Natural killer cell (primary cell): ENCODE measurements at regions of chrX and their contacts with region 1.

Region 1: GRCh38 chrX:129606918-129607317 is 47.8 kb downstream of the APLN start:
- DNase-seq: peak; percentile 26 to 79
- ATAC-seq: peak; percentile 64 to 78 (median 69)
- H3K4me3 ChIP-seq: no peak overlapping the region
- H3K4me3 Mint-ChIP-seq: no peak overlapping the region
- H3K27ac ChIP-seq: no peak overlapping the region
- H3K27ac Mint-ChIP-seq: no peak overlapping the region
- H3K4me1 ChIP-seq: peaks cover 21% of the 10 kb centered on the region
- H3K4me1 Mint-ChIP-seq: peaks cover 6 to 24% of the 10 kb centered on the region in 2 donors
- H3K27me3 ChIP-seq: no peaks in the 10 kb centered on the region
- H3K27me3 Mint-ChIP-seq: peaks cover 0 to 11% of the 10 kb centered on the region in 2 donors
- CTCF ChIP-seq: peak; percentile 62

Region 2: GRCh38 chrX:129449148-129449547 is 157.8 kb before region 1 on chrX:
- intact Hi-C with region 1: no loop called
- DNase-seq: no peak
- ATAC-seq: peak in 1 of 3 donors; percentile 81
- H3K4me3 ChIP-seq: no peak overlapping the region
- H3K4me3 Mint-ChIP-seq: no peak overlapping the region
- H3K27ac ChIP-seq: no peak overlapping the region
- H3K27ac Mint-ChIP-seq: no peak overlapping the region
- H3K4me1 ChIP-seq: no peaks in the 10 kb centered on the region
- H3K4me1 Mint-ChIP-seq: no peaks in the 10 kb centered on the region
- H3K27me3 ChIP-seq: no peaks in the 10 kb centered on the region
- H3K27me3 Mint-ChIP-seq: peaks cover 0 to 12% of the 10 kb centered on the region in 2 donors
- CTCF ChIP-seq: no peak

Region 3: GRCh38 chrX:129726307-129727111 is 119.6 kb after region 1 on chrX:
- intact Hi-C with region 1: loop called (anchors 5 kb)
- DNase-seq: peak in 1 of 2 donors; percentile 56
- ATAC-seq: peak in 2 of 3 donors; percentile 44 to 58
- H3K4me3 ChIP-seq: no peak overlapping the region
- H3K4me3 Mint-ChIP-seq: no peak overlapping the region
- H3K27ac ChIP-seq: no peak overlapping the region
- H3K27ac Mint-ChIP-seq: no peak overlapping the region
- H3K4me1 ChIP-seq: peaks cover 10% of the 10 kb centered on the region
- H3K4me1 Mint-ChIP-seq: peaks cover 22 to 35% of the 10 kb centered on the region in 2 donors
- H3K27me3 ChIP-seq: no peaks in the 10 kb centered on the region
- H3K27me3 Mint-ChIP-seq: peaks cover 0 to 25% of the 10 kb centered on the region in 2 donors
- CTCF ChIP-seq: peak; percentile 50

Region 4: GRCh38 chrX:129823115-129823514 is 216.2 kb after region 1 on chrX:
- intact Hi-C with region 1: loop called (anchors 1 kb)
- DNase-seq: peak; percentile 16 to 81
- ATAC-seq: peak; percentile 77 to 89 (median 85)
- H3K4me3 ChIP-seq: no peak overlapping the region
- H3K4me3 Mint-ChIP-seq: no peak overlapping the region
- H3K27ac ChIP-seq: no peak overlapping the region
- H3K27ac Mint-ChIP-seq: no peak overlapping the region
- H3K4me1 ChIP-seq: no peaks in the 10 kb centered on the region
- H3K4me1 Mint-ChIP-seq: no peaks in the 10 kb centered on the region
- H3K27me3 ChIP-seq: no peaks in the 10 kb centered on the region
- H3K27me3 Mint-ChIP-seq: no peaks in the 10 kb centered on the region
- CTCF ChIP-seq: peak; percentile 68

Region 5: DNA sequence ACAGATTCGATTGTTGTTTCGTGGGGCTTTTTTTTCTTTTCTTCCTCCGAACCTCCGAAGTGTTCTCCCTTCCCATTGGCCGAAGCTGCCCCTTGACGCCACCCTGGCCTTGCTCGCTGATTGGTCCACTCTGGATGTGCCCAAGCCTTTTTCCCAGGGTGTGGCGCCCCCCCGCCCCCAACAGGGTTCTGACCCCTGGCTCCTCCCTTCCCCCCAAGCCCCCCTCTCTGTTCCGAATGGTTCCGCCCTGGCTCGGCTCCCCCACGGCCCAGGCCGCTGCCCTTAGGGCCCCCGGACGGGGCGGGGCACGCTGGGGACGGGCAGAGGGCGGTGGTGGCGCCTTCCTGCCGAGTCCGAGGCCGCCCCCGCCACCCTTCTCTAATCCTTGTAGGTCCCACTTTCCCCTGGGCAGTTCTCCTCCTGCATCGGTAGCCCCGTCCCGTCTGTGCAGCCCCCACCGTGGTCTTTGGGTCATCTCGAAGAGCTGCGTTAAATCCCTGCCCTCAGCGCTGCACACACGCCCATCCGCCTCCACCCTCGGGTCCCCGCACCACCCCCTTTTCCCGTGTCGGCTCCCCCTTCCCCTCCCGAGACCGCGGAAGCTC is 324.6 kb after region 1 on chrX:
- intact Hi-C with region 1: loop called (anchors 10 kb)
- DNase-seq: peak; percentile 33 to 76
- ATAC-seq: peak; percentile 64 to 80 (median 68)
- H3K4me3 ChIP-seq: peak overlapping the region; percentile 75
- H3K4me3 Mint-ChIP-seq: peak overlapping the region; percentile 85
- H3K27ac ChIP-seq: peak overlapping the region; percentile 78
- H3K27ac Mint-ChIP-seq: peak overlapping the region; percentile 80 to 84
- H3K4me1 ChIP-seq: peaks cover 7% of the 10 kb centered on the region
- H3K4me1 Mint-ChIP-seq: peaks cover 0 to 5% of the 10 kb centered on the region in 2 donors
- H3K27me3 ChIP-seq: no peaks in the 10 kb centered on the region
- H3K27me3 Mint-ChIP-seq: no peaks in the 10 kb centered on the region
- CTCF ChIP-seq: no peak

Region 6: GRCh38 chrX:130024127-130024526 is 417.2 kb after region 1 on chrX:
- intact Hi-C with region 1: loop called (anchors 10 kb)
- DNase-seq: peak; percentile 68 to 91
- ATAC-seq: peak; percentile 99 to 100 (median 100)
- H3K4me3 ChIP-seq: no peak overlapping the region
- H3K4me3 Mint-ChIP-seq: peak overlapping the region; percentile 71
- H3K27ac ChIP-seq: peak overlapping the region; percentile 45
- H3K27ac Mint-ChIP-seq: peak overlapping the region; percentile 49 to 83
- H3K4me1 ChIP-seq: peaks cover 12% of the 10 kb centered on the region
- H3K4me1 Mint-ChIP-seq: peaks cover 13% of the 10 kb centered on the region in 2 donors
- H3K27me3 ChIP-seq: no peaks in the 10 kb centered on the region
- H3K27me3 Mint-ChIP-seq: no peaks in the 10 kb centered on the region
- CTCF ChIP-seq: no peak

Region 7: DNA sequence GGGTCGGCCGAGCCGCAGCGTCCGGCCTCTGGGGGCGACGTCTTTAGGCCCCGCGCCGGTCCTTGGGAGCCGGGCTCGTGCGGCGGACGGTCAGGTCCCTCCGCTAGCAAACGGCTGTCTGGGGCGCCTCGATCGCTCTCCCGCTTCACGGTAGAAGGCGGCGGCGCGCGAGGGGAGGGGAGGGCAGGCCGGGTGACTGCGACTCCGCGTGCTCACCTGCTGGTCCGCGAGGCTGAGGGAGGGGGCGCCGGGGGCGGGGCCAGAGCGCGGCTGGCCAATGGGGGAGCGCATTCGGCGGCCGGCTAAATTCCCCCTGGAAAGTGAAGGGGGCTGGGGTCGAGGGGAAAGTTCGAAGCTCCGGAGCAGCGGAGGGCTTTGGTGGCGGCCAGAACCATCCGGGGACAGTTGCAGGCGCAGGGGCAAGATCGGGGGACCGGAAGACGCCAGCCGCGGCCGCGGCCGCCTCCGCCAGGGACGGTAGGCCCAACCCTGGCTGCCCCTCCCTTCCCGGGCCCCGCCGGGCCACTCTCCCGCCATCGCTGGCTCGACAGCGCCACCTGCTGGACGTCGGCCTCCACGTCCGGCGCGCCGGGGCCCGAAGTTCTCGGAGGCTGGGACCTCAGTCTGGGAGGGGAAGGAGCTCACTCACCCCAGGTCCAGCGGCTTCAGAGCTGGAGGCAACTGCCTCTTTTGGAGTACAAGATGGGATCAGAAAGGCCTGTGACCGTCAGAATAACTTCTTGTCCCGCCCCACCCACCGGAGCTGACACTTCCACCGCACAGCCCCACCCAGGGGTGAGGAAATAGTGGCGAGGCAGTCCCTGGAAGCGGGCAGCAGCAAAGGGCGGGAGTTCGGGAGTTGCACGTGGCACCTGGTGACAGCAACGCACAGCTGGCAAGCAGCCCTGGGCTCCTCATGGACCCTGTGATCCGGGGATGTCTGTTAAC is 453.5 kb after region 1 on chrX:
- intact Hi-C with region 1: loop called (anchors 2 kb)
- DNase-seq: peak; percentile 83 to 86
- ATAC-seq: peak; percentile 91 to 97 (median 92)
- H3K4me3 ChIP-seq: peak overlapping the region; percentile 46
- H3K4me3 Mint-ChIP-seq: peak overlapping the region; percentile 83
- H3K27ac ChIP-seq: no peak overlapping the region
- H3K27ac Mint-ChIP-seq: peak overlapping the region in 1 of 2 donors; percentile 70
- H3K4me1 ChIP-seq: peaks cover 15% of the 10 kb centered on the region
- H3K4me1 Mint-ChIP-seq: peaks cover 4 to 7% of the 10 kb centered on the region in 2 donors
- H3K27me3 ChIP-seq: no peaks in the 10 kb centered on the region
- H3K27me3 Mint-ChIP-seq: no peaks in the 10 kb centered on the region
- CTCF ChIP-seq: peak; percentile 70

Region 8: GRCh38 chrX:130196466-130196865 is 589.5 kb after region 1 on chrX:
- intact Hi-C with region 1: loop called (anchors 10 kb)
- DNase-seq: no peak
- ATAC-seq: no peak
- H3K4me3 ChIP-seq: no peak overlapping the region
- H3K4me3 Mint-ChIP-seq: no peak overlapping the region
- H3K27ac ChIP-seq: no peak overlapping the region
- H3K27ac Mint-ChIP-seq: no peak overlapping the region
- H3K4me1 ChIP-seq: no peaks in the 10 kb centered on the region
- H3K4me1 Mint-ChIP-seq: no peaks in the 10 kb centered on the region
- H3K27me3 ChIP-seq: no peaks in the 10 kb centered on the region
- H3K27me3 Mint-ChIP-seq: peaks cover 0 to 5% of the 10 kb centered on the region in 2 donors
- CTCF ChIP-seq: no peak